Activated B cell treated with CpG ODN at 0.5 μM for 24 hours (primary cell): ENCODE measurements at regions of chr6 and their contacts with region 1.

Region 1: DNA sequence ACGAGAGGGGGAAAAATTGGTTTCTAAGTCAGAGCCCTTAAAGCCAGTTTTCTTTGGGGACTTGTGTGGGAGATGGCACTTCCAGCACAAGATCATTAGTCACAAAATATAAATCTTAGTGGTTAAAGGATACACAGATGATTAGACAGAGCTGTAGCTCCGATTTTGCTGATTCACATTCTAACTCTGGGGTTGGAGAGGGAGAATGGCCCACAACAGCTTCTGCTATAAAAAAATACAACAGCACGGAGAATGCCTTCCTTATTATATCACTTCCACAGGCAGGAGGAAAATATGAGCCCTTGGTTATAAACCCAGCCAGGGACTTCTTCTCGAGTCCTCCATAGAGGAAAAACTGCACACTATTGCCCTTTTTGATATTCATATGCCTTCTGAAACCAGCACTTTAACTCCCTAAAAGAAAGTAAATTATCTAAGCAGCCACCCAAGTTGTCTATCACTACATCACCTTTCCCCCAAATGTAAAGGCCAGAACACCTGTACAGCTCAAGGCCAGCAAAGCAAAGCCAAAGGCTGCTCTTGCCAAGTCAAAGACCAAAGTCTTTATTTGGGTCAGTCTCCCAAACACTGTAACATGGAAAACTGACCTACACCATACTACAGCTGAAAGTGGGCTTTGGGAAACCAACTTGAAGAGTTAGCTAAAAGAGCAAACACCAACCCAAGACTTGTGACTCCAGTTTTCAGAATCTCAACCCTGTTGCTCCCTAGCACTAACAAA is 10.4 kb downstream of the MRPL14 start:
- DNase-seq: no peak
- ATAC-seq: no peak
- H3K4me3 Mint-ChIP-seq: no peak overlapping the region
- H3K27ac Mint-ChIP-seq: no peak overlapping the region
- H3K4me1 Mint-ChIP-seq: peaks cover 34% of the 10 kb centered on the region
- H3K27me3 Mint-ChIP-seq: no peaks in the 10 kb centered on the region
- CTCF ChIP-seq: no peak

Region 2: DNA sequence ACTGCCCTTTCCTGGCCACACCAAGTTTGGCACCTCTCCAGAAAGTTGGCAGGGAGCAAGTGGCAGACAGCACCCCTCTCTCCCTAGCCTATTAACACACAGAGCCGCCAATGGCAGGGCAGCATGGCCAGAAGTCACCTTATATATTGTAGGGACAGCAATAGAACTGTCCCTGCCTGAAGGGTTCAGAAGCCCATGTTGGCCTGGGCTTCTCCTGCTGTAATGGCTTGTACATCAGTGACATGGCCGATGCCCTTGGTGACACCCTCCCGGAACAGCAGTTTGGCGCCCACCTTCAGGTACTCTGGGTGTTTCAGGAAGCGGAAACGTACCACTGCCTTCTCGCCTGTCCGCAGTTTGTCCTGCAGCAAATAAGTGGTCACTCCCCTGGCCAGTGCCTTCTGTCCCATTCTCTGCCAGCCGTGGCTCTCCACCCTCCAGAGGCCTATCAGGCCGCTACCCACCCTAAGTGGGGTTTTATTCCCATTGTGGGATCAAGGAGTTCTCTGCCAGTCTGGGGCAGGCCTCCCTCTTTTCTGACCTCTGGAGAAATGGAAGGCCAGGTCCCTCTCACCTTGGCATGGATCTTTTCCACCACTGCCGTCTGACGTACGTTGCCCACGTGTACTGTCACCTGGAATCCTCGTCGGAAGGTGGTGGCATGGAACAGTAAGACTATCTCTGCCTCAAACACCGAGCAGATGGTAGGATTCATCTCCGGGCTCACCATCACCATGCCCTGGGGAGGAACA is 495.2 kb before region 1 on chr6:
- CTCF ChIA-PET with region 1: no interaction called
- POLR2A ChIA-PET with region 1: interaction called, 17 read pairs
- intact Hi-C with region 1: no loop called
- DNase-seq: no peak
- ATAC-seq: no peak
- H3K4me3 Mint-ChIP-seq: no peak overlapping the region
- H3K27ac Mint-ChIP-seq: no peak overlapping the region
- H3K4me1 Mint-ChIP-seq: peaks cover 5% of the 10 kb centered on the region
- H3K27me3 Mint-ChIP-seq: no peaks in the 10 kb centered on the region
- CTCF ChIP-seq: no peak